Activated naive CD4-positive, alpha-beta T cell treated with anti-CD3 and anti-CD28 coated beads, Interleukin-2, amount 10 ng/mL, durations not matched to agents 7 days and 5 days (primary cell): ENCODE measurements at regions of chr7 and their contacts with region 1.

Region 1: GRCh38 chr7:100132697-100133151 is 6.0 kb downstream of the MBLAC1 start:
- DNase-seq: peak; percentile 81
- H3K4me3 Mint-ChIP-seq: no peak overlapping the region
- H3K27ac Mint-ChIP-seq: no peak overlapping the region
- H3K4me1 Mint-ChIP-seq: peaks cover 36% of the 10 kb centered on the region
- H3K27me3 Mint-ChIP-seq: peaks cover 16% of the 10 kb centered on the region

Region 2: GRCh38 chr7:99975782-99976521 is 156.8 kb before region 1 on chr7 and contains the start of gene AZGP1:
- CTCF ChIA-PET with region 1: interaction called, 14 read pairs
- DNase-seq: no peak
- H3K4me3 Mint-ChIP-seq: no peak within 1 kb of the TSS
- H3K27ac Mint-ChIP-seq: no peak within 1 kb of the TSS
- H3K4me1 Mint-ChIP-seq: no peaks in the 10 kb centered on the region
- H3K27me3 Mint-ChIP-seq: peaks cover 25% of the 10 kb centered on the region

Region 3: GRCh38 chr7:99997545-99998137 is 135.1 kb before region 1 on chr7:
- CTCF ChIA-PET with region 1: interaction called, 22 read pairs
- DNase-seq: peak; percentile 81
- H3K4me3 Mint-ChIP-seq: peak overlapping the region; percentile 66
- H3K27ac Mint-ChIP-seq: peak overlapping the region; percentile 87
- H3K4me1 Mint-ChIP-seq: peaks cover 29% of the 10 kb centered on the region
- H3K27me3 Mint-ChIP-seq: peaks cover 39% of the 10 kb centered on the region

Region 4: DNA sequence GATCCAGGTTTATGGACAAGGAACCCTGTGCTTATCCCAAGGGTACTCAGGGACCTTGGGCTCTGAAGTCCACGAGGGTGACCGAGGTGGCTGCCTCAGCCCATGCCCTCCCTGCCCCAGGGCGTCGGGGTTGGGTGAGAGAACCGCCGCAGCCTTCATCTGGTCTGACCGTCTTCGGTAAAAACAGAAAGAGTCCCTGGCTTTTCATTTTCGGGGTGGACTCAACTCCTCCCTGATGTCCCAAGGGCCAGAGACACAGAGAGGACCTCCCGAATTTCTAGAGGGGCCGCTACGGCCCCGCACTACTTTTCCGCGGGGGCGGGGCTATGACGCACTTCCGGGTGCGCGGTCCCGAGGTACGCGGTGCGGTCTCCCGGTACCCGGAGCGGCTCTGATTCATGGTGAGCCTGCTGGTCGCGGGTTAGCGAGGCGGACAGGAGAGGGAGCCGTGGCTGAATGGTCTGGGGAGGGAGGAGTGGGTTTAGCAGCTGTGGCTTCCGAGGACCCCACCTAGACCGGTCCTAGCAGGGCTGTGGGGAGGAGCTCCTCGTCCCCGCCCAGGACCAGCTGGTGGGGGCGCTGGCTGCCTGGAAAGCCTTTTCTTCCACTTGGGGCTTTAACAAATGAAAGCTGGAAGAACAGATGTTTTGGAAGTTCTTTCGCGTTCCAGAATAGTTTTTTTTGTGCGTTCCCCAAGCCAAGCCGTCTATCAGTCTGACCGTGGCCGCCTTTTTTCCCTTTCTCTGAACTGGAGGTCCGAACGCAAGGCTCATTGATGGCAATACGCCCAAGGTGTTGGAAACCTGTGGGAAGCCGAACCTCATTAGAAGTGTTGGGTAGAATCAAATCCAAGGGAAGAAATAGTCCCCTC is 83.0 kb before region 1 on chr7 and contains the start of gene ZSCAN21:
- CTCF ChIA-PET with region 1: no interaction called
- DNase-seq: peak; percentile 85
- H3K4me3 Mint-ChIP-seq: peak within 1 kb of the TSS; percentile 84
- H3K27ac Mint-ChIP-seq: peak within 1 kb of the TSS; percentile 89
- H3K4me1 Mint-ChIP-seq: peaks cover 22% of the 10 kb centered on the region
- H3K27me3 Mint-ChIP-seq: peaks cover 12% of the 10 kb centered on the region

Region 5: DNA sequence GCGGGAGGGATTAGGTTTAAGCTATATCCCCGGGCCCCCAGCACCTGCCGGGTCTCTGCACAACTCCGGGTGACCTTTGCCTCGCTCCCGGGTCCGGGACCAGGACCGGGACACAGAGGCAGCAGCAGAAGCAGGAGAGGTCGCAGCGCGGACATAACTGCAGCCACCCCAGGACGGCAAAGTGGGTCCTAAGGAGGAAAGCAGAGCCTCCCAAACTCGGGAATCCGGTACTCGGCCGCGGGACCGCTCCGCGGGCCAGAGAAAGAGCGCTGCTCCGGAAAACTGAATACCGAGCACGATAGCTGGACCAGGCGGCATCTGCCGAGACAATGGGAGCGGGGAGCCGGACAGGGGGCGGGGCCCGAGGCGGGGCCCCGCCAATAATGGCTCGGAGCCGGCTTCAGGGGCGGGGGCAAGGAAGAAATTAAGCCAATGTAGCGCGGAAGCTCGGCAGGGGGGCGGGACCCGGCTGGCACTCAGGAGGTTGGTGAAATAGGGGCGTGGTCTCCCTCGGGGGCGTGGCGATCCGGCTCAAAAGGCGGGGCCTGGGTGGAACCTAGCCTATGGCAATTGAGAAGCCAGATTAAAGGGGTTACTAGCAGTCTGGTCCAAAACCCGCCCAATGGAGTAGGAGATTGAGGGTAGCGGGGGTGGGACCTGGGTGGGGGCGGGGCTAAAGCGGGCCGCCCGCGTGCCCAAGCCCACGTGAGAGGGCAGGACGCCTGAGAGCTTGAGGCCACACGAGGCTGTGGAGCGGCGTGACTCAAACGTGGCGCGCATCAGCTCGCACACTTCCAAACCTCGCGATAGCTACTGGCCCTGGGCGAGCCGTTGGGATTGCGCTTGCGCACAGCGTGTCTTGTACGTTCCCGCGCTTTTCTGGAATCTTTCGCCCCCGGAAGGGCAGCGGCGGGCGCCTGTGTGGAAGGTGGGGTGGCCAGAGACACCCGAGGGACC is 44.6 kb after region 1 on chr7 and contains the starts of genes GPC2 and STAG3:
- CTCF ChIA-PET with region 1: interaction called, 10 read pairs
- DNase-seq: peak; percentile 99
- H3K4me3 Mint-ChIP-seq: peak within 1 kb of the TSS; percentile 75
- H3K27ac Mint-ChIP-seq: peak within 1 kb of the TSS; percentile 42
- H3K4me1 Mint-ChIP-seq: peaks cover 74% of the 10 kb centered on the region
- H3K27me3 Mint-ChIP-seq: peaks cover 40% of the 10 kb centered on the region

Region 6: DNA sequence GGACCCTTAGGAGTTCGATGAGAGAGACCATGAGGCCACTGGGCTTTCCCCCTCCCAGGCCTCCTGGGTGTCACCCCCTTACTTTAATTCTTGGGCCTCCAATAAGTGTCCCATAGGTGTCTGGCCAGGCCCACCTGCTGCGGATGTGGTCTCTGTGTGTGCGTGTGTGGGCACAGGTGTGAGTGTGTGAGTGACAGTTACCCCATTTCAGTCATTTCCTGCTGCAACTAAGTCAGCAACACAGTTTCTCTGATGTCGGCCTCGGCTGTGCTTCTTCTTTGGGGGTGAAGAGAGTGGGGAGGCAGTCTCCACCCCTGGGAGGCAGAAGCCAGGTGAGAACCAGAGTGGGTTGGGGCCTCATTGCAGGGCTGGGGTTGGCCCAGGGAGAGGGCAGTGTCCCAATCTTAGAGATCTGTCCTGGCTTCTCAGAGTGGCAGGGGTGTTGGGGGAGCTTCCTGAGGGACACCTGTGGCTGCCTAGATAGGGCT is 88.6 kb after region 1 on chr7:
- CTCF ChIA-PET with region 1: interaction called, 30 read pairs
- DNase-seq: peak; percentile 88
- H3K4me3 Mint-ChIP-seq: peak overlapping the region; percentile 87
- H3K27ac Mint-ChIP-seq: peak overlapping the region; percentile 97
- H3K4me1 Mint-ChIP-seq: peaks cover 71% of the 10 kb centered on the region
- H3K27me3 Mint-ChIP-seq: no peaks in the 10 kb centered on the region

Region 7: DNA sequence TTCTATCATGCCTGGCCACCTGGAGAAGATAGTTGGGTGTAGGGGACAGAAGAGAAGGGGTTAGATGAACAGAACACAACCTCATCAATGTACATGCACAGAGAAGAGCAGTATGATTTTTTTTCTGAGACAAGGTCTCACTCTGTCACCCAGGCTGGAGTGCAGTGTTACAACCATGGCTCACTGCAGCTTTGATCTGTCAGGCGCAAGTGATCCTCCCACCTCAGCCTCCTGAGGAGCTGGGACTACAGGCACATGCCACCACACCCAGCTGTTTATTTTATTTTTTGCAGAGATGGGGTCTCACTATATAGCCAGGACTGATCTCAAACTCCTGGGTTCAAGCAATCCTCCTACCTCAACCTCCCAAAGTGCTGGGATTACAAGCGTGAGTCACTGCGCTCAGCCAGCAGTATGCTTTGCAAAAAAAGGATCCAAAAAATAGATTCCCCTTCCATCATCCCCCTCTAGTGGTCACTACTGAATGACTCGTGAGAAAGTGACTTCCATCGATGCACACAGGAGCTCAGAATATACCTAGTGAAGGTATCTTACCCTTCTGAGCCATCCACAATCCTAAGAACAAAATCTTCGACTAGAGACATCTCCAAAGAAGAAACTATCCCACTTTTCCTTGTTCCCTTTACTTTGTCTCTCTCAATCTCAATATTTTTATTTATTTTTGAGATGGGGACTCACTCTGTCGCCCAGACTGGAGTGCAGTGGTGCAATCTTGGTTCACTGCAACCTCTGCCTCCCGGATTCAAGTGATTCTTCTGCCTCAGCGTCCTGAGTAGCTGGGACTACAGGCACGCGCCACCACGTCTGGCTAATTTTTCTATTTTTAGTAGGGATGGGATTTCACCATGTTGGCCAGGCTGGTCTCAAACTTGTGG is 274.8 kb after region 1 on chr7:
- CTCF ChIA-PET with region 1: interaction called, 46 read pairs
- DNase-seq: peak; percentile 54
- H3K4me3 Mint-ChIP-seq: no peak overlapping the region
- H3K27ac Mint-ChIP-seq: no peak overlapping the region
- H3K4me1 Mint-ChIP-seq: peaks cover 2% of the 10 kb centered on the region
- H3K27me3 Mint-ChIP-seq: peaks cover 37% of the 10 kb centered on the region